ENCODE measurements at regions of chr10 and their contacts with region 1.

Region 1: DNA sequence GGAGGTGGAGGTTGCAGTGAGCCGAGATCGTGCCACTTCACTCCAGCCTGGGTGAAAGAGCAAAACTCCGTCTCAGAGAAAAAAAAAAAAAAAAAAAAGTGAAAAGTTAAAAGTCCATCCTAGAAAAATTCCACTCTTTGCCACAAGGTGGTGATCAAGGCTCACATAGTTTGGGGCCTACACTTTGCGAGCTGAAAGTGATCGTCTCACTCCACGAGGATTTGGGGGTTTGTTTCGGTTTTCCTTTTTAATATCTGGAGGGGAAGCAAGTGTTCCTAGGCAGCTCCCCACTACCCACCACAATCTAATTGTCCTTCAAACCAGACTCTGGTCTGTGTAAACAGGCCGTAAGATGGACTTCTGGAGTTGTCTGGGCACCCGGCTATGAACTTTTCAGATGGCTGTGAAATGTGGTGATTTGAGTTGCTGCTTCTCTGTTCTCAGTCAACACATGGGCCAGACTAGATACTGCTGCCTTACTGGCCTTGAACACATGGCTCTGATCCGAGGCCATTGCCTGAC is 27.1 kb downstream of the PRLHR start:
- DNase-seq: peak; percentile 61
- H3K4me3 ChIP-seq: no peak overlapping the region
- H3K27ac ChIP-seq: no peak overlapping the region
- H3K4me1 ChIP-seq: no peaks in the 10 kb centered on the region
- H3K27me3 ChIP-seq: peaks cover 0 to 6% of the 10 kb centered on the region in 2 experiments
- CTCF ChIP-seq: peak; percentile 45 to 52
- POLR2A ChIP-seq: no peak

Region 2: GRCh38 chr10:118459726-118460193 is 108.6 kb before region 1 on chr10:
- CTCF ChIA-PET with region 1: no interaction called
- POLR2A ChIA-PET with region 1: no interaction called
- dilution Hi-C with region 1: no loop called
- intact Hi-C with region 1: loop called (anchors 1 kb)
- DNase-seq: peak; percentile 68
- H3K4me3 ChIP-seq: no peak overlapping the region
- H3K27ac ChIP-seq: no peak overlapping the region
- H3K4me1 ChIP-seq: no peaks in the 10 kb centered on the region
- H3K27me3 ChIP-seq: no peaks in the 10 kb centered on the region
- CTCF ChIP-seq: peak; percentile 67 to 80
- POLR2A ChIP-seq: no peak

Region 3: GRCh38 chr10:118511711-118512110 is 56.7 kb before region 1 on chr10:
- CTCF ChIA-PET with region 1: no interaction called
- POLR2A ChIA-PET with region 1: no interaction called
- dilution Hi-C with region 1: no loop called
- intact Hi-C with region 1: no loop called
- DNase-seq: no peak
- H3K4me3 ChIP-seq: no peak overlapping the region
- H3K27ac ChIP-seq: no peak overlapping the region
- H3K4me1 ChIP-seq: no peaks in the 10 kb centered on the region
- H3K27me3 ChIP-seq: no peaks in the 10 kb centered on the region
- CTCF ChIP-seq: no peak
- POLR2A ChIP-seq: no peak

Region 4: GRCh38 chr10:118584181-118584954 is 16.0 kb after region 1 on chr10:
- CTCF ChIA-PET with region 1: interaction called, 30 read pairs
- POLR2A ChIA-PET with region 1: no interaction called
- dilution Hi-C with region 1: no loop called
- intact Hi-C with region 1: no loop called
- DNase-seq: peak; percentile 12
- H3K4me3 ChIP-seq: no peak overlapping the region
- H3K27ac ChIP-seq: no peak overlapping the region
- H3K4me1 ChIP-seq: no peaks in the 10 kb centered on the region
- H3K27me3 ChIP-seq: peaks cover 0 to 3% of the 10 kb centered on the region in 2 experiments
- CTCF ChIP-seq: no peak
- POLR2A ChIP-seq: no peak

Region 5: DNA sequence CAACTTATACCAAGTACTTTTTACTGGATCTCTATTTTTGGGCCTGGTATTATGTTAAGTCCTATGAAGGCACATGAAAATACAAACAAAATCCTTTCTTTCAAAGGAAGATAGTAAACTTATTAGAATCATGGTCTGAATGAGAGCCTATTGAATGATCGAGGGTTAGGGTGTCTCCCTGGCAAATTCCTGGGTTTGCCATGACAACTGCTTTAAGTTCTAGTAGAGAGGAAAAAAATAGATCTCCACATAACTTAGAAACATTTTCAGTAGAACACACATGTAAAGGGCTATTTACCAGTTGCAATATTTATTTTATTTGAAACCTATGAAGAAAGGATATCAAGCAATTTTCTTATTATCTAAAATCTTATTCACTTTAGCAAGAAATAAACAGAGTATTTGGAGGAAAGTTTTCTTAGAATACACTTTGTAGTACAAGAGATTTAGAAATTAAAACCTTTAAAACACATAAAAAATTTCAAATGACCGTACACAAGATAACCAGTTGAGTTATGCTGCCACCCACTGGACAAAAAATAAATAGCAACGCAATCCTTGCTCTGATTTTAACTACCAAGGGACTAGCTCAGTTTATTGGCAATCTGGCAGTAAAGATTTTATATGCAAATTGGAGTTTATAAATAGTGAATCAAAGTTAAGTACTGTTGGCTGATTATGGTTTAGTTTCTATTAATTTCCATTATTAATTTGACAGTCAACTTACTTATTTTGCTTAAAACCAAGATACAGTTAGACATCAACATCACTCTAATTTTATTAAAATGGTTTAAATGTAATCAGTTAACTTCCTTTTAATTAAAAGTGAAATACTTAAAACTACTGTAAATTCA is 152.5 kb after region 1 on chr10:
- CTCF ChIA-PET with region 1: interaction called, 168 read pairs
- POLR2A ChIA-PET with region 1: interaction called, 3 read pairs
- dilution Hi-C with region 1: no loop called
- intact Hi-C with region 1: loop called (anchors 1 kb)
- DNase-seq: peak; percentile 75
- H3K4me3 ChIP-seq: no peak overlapping the region
- H3K27ac ChIP-seq: no peak overlapping the region
- H3K4me1 ChIP-seq: peaks cover 11% of the 10 kb centered on the region
- H3K27me3 ChIP-seq: no peaks in the 10 kb centered on the region
- CTCF ChIP-seq: peak; percentile 47 to 51
- POLR2A ChIP-seq: no peak

Region 6: DNA sequence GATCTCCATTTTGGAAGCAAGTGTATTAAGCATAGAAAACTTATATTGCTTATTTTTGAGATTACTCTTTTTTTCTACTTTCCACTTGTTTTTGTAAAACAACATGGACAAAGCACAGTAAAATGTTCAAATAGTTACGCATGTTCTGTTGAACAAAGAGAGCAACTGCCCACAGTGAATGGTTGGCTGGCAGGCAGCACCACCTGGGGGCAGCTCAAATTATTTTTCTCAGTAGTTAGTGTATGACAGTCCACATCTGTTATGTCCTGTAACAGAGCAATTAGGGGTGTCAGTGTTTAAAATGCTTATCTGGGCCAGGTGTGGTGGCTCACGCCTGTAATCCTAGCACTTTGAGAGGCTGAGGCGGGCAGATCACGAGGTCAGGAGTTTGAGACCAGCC is 232.5 kb after region 1 on chr10:
- CTCF ChIA-PET with region 1: interaction called, 45 read pairs
- POLR2A ChIA-PET with region 1: interaction called, 8 read pairs
- dilution Hi-C with region 1: no loop called
- intact Hi-C with region 1: loop called (anchors 1 kb)
- DNase-seq: peak; percentile 27
- H3K4me3 ChIP-seq: no peak overlapping the region
- H3K27ac ChIP-seq: no peak overlapping the region
- H3K4me1 ChIP-seq: no peaks in the 10 kb centered on the region
- H3K27me3 ChIP-seq: peaks cover 0 to 3% of the 10 kb centered on the region in 2 experiments
- CTCF ChIP-seq: peak in 1 of 2 donors; percentile 17
- POLR2A ChIP-seq: no peak

Region 7: DNA sequence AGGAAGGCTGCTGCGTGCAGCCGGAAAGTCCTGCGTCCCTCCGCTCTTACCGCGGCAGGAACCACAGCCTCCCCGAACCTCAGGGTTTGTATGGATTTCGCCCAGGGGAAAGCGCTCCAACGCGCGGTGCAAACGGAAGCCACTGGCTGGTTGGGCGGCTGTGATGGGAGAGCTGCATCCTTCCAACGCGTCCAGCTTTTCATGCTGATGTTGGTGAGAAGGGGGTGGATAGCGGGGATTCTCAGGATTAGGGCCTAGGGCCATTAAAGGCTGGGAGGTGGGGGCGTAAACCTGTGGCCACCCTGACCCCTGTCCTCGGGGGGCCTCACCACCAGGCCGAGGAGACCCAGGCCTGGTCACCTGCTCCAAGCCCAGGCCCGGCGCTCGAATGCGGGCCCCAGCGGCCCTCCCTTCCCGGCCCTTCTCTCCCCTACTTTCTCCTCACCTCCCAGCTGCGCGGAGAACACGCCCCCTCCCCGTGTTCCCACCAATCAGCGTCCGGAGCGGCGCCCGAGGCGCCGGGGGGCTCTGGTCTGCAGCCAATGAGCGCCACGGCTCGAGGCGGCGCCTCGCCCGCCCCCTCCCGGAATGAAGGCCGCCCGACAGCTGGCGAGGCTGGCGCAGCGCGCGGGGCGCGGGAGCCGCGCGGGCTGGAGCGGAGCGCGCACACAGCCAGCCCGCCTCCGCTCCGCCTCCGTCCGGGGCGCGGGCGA is 460.7 kb after region 1 on chr10:
- CTCF ChIA-PET with region 1: interaction called, 8 read pairs
- POLR2A ChIA-PET with region 1: no interaction called
- dilution Hi-C with region 1: no loop called
- intact Hi-C with region 1: loop called (anchors 2 kb)
- DNase-seq: peak; percentile 87
- H3K4me3 ChIP-seq: peak overlapping the region in 1 of 3 experiments; percentile 37
- H3K27ac ChIP-seq: no peak overlapping the region
- H3K4me1 ChIP-seq: peaks cover 8% of the 10 kb centered on the region
- H3K27me3 ChIP-seq: no peaks in the 10 kb centered on the region
- CTCF ChIP-seq: peak; percentile 4 to 38
- POLR2A ChIP-seq: no peak